ENCODE measurements at regions of chr2 and their contacts with region 1.

Region 1: GRCh38 chr2:102114851-102115497 is 27.6 kb upstream of the IL1R1 start:
- DNase-seq: peak in 1 of 2 experiments; percentile 47
- H3K4me3 ChIP-seq: no peak overlapping the region
- H3K27ac ChIP-seq: no peak overlapping the region
- H3K4me1 ChIP-seq: no peaks in the 10 kb centered on the region
- H3K27me3 ChIP-seq: no peaks in the 10 kb centered on the region
- CTCF ChIP-seq: no peak

Region 2: GRCh38 chr2:101587251-101587650 is 527.7 kb before region 1 on chr2:
- CTCF ChIA-PET with region 1: no interaction called
- POLR2A ChIA-PET with region 1: no interaction called
- intact Hi-C with region 1: no loop called
- DNase-seq: no peak
- H3K4me3 ChIP-seq: no peak overlapping the region
- H3K27ac ChIP-seq: no peak overlapping the region
- H3K4me1 ChIP-seq: no peaks in the 10 kb centered on the region
- H3K27me3 ChIP-seq: no peaks in the 10 kb centered on the region
- CTCF ChIP-seq: no peak

Region 3: DNA sequence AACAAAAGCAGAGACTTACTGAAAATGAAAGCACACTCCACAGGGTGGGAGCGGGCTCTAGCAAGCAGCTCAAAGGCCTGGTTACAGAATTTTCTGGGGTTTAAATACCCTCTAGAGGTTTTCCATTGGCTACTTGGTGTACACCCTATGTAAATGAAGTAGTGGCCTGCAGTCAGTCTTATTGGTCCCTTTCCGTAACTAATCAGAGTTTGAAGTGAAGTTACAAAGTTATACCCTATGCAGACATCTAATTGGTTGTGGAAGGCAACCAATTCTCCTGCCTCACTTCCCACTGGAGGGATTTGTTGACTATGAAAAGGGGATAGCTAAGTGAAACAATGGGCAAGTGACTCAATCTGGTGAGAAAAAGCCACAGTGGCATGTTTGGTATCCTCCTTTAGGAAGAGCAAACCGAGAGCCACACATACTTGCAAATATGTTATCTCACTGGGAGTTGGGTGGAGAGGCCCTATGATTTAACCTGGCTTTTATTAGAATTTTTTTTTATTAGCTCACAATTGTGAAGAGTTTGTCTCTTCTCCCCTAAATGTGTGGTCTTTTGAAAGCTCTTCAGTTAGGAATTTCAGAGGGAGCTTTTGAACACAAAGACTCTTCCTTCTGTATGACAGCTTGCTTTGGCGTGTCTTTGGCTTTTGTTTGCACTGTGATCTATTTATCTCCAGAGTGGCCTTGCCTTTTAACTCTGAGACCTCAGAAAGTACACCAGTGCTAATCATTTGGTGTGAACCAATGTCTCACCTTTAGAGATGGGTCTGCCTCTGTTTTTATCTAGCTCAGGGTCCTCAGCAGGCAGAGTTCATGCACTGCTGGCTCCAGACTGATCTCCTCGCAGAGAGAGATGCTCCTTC is 347.9 kb before region 1 on chr2:
- CTCF ChIA-PET with region 1: no interaction called
- POLR2A ChIA-PET with region 1: no interaction called
- intact Hi-C with region 1: no loop called
- DNase-seq: peak; percentile 60 to 89
- H3K4me3 ChIP-seq: no peak overlapping the region
- H3K27ac ChIP-seq: peak overlapping the region; percentile 73
- H3K4me1 ChIP-seq: peaks cover 73% of the 10 kb centered on the region
- H3K27me3 ChIP-seq: no peaks in the 10 kb centered on the region
- CTCF ChIP-seq: no peak

Region 4: GRCh38 chr2:102033031-102033749 is 81.8 kb before region 1 on chr2:
- CTCF ChIA-PET with region 1: interaction called, 14 read pairs
- POLR2A ChIA-PET with region 1: no interaction called
- intact Hi-C with region 1: no loop called
- DNase-seq: peak; percentile 67 to 77
- H3K4me3 ChIP-seq: no peak overlapping the region
- H3K27ac ChIP-seq: no peak overlapping the region
- H3K4me1 ChIP-seq: peaks cover 23% of the 10 kb centered on the region
- H3K27me3 ChIP-seq: no peaks in the 10 kb centered on the region
- CTCF ChIP-seq: no peak